Posterior cingulate gyrus (tissue), 11 donors: ENCODE measurements at regions of chr1 and their contacts with region 1.

Region 1: DNA sequence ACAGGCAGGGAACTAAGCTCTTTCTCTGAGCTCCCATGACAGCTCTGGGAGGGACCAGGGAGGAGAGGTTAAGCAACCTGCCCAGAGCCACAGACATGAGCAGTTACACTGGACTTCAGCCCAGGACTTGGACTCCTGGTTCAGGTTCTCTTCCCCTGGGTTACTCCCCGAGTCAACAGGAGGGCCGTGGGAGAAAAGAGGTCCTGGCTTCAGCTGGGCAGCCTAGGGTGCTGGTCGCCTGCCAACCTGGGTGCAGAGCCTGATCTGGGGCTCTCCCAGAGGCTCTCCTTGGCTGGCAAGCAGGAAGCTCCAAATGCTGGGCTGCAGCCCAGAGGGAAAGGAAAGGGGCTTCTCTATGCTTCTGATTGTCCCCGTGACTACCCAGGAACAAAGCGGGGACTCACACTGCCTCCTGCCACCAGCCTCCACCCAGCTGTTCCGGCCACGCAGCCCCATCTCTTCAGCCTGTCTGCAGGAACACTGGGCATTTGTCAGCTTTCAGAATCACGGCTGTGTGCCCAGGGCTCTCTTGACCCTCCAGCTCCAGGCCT is 141.8 kb downstream of the HIVEP3 start:
- DNase-seq: peak; percentile 78 to 99 (median 88)

Region 2: GRCh38 chr1:41618091-41618825 is 158.7 kb before region 1 on chr1:
- intact Hi-C with region 1: loop called (anchors 2 kb)
- DNase-seq: peak; percentile 81 to 98 (median 87)

Region 3: GRCh38 chr1:41802532-41803501 is 25.9 kb after region 1 on chr1:
- intact Hi-C with region 1: no loop called
- DNase-seq: peak in 6 of 10 donors; percentile 36 to 91 (median 42)